Calu3 (cell line): ENCODE measurements at regions of chr1 and their contacts with region 1.

Region 1: DNA sequence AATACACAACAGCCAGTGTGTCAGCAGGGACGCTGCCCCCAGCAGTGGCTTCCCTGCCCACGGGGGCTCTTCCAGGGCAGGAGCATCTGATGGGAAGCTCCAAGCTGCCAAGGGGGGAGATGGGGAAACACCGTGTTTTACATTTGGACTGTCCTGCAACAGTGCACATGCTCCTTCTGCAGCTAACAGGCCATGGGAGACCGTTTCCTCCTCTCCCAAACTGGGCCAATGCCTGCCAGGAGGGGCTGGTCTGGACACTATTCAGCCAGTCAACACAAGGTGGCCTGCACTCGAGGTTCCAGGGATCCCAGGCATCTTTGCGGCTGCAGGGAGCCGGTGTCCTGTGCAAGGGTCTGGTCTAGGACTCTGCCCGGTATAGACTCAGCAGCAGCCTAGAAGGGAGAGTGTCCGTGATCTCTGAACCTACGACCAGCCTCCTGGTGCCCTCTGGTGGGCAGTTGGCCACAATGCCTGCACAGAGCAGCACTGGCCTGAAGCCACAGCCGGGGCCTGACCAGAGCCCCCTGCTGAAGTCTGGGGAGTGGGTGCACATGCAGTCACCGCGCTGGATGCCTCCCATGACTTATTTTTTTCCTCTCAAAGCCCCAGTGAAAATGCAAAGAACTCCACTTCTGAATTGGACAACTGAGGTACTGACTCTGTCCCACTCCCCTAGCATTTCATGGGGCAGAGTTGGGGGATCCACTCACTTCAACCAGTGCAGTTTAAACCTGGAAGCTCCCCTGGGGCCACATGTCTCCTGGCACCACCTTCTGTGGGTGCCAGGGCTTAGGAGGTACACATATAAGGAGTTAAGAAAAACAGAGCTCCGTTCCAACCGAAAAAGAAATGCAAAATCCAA is 33.3 kb downstream of the RCC2 start:
- DNase-seq: peak; percentile 72
- H3K4me3 Mint-ChIP-seq: no peak overlapping the region
- H3K27ac Mint-ChIP-seq: no peak overlapping the region
- H3K4me1 Mint-ChIP-seq: no peaks in the 10 kb centered on the region
- H3K27me3 Mint-ChIP-seq: no peaks in the 10 kb centered on the region
- CTCF ChIP-seq: peak; percentile 50

Region 2: DNA sequence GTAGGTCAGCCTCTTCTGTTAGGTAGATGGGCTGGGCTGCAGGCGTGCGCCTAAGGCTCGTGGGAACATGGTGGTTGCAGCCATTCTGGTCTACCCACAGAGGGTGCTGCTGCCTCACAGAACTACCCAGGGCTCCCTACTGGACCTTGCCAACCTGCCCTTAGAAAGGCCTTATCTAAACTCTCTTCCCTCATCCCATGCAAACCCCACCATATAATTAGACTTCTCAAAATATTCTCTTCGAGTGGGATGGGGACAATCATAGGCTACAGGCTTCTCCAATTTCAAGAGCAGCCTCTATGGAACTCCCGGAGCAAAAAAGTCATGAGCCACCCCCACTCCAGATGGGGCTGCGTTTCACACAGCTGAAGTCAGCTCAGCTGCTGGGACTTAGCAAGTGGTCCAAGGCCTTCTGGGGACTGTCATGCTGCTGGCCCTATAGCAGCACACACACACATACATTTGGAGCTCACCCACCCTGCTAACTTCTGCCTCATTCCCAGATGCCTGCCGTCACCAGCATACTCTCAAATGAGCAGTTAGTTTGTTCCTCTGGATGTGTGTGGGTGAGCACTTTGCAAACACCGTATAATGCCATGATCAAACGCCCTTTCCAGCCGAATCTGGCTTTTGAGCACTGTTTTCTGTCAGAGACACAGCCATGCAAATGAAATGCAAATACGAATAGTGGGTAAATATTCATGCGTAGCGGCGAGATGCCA is 346.2 kb before region 1 on chr1:
- CTCF ChIA-PET with region 1: no interaction called
- intact Hi-C with region 1: loop called (anchors 2 kb)
- DNase-seq: peak; percentile 74
- H3K4me3 Mint-ChIP-seq: no peak overlapping the region
- H3K27ac Mint-ChIP-seq: no peak overlapping the region
- H3K4me1 Mint-ChIP-seq: no peaks in the 10 kb centered on the region
- H3K27me3 Mint-ChIP-seq: peaks cover 15% of the 10 kb centered on the region
- CTCF ChIP-seq: peak; percentile 55

Region 3: DNA sequence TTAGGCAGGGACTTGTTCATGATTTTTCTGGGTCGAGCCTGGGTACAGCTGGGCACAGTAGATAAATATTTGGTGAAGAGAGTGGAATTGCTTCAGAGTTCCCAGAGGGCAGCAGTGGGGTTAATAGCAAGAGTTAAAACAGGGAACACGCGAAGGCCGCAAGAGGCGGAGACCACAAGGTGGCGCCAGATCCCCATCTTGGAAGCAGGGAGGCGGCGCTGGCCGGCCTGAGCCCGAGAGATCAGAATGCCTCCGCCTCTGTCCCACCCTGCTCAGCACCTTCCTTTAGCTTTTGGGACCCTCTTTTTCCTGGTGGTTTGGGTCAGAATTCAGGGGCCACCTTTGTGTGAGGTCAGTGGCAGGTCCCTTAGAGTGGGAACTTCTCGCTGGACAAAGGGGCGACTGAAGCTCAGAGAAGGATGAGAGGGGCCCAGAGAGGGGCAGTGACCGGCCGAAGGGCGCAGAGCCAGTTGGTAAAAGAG is 280.3 kb before region 1 on chr1:
- CTCF ChIA-PET with region 1: no interaction called
- intact Hi-C with region 1: loop called (anchors 5 kb)
- DNase-seq: peak; percentile 88
- H3K4me3 Mint-ChIP-seq: no peak overlapping the region
- H3K27ac Mint-ChIP-seq: no peak overlapping the region
- H3K4me1 Mint-ChIP-seq: no peaks in the 10 kb centered on the region
- H3K27me3 Mint-ChIP-seq: no peaks in the 10 kb centered on the region
- CTCF ChIP-seq: peak; percentile 95

Region 4: DNA sequence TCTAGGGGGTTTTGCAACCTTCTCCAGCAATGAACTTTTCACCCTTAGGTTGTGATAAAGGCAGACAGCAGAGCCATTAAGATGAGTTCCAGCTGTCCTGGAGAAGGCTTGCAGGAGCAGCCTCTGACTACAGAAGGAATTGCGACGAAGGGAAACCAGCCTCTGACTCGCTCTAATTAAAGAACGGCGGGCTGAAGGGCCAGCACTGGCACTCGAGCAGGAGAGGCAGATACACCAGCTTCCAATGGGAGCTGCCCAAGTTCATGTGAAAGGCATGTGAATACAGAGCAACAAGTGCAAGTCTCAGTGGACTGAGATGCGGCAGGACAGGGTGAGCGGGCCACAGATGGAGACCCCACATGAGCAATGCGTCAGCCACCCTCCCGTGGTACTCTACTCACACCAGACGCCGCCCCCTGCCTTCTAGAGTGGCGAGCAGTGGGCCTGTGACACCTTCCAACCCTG is 17.7 kb after region 1 on chr1:
- CTCF ChIA-PET with region 1: no interaction called
- intact Hi-C with region 1: no loop called
- DNase-seq: no peak
- H3K4me3 Mint-ChIP-seq: no peak overlapping the region
- H3K27ac Mint-ChIP-seq: peak overlapping the region; percentile 18
- H3K4me1 Mint-ChIP-seq: peaks cover 8% of the 10 kb centered on the region
- H3K27me3 Mint-ChIP-seq: no peaks in the 10 kb centered on the region
- CTCF ChIP-seq: no peak

Region 5: GRCh38 chr1:17540255-17541001 is 134.3 kb after region 1 on chr1:
- CTCF ChIA-PET with region 1: no interaction called
- intact Hi-C with region 1: no loop called
- DNase-seq: no peak
- H3K4me3 Mint-ChIP-seq: peak overlapping the region; percentile 82
- H3K27ac Mint-ChIP-seq: peak overlapping the region; percentile 75
- H3K4me1 Mint-ChIP-seq: peaks cover 18% of the 10 kb centered on the region
- H3K27me3 Mint-ChIP-seq: no peaks in the 10 kb centered on the region
- CTCF ChIP-seq: no peak